Activated CD4-positive, alpha-beta memory T cell treated with anti-CD3 and anti-CD28 coated beads for 36 hours (primary cell): ENCODE measurements at regions of chr19 and their contacts with region 1.

Region 1: DNA sequence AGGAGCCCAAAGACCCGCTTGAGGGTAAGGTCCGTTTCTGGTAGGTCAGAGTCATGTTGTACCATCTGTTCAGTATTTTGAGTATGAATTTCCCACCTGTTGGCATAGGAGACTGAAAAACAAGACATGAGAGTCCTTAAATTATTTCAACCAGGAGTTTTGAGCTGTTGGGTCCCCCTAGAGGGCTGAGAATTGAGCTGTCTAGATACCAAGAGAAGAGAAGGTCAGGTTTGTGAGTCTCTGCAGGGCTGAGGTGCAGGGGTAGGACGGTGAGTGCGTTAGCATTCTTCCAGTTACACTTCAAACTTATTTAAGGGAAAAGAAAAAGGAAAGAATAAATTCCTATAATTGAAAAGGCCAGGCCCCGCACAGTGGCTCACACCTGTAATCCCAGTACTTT is 5.0 kb downstream of the CBLC start:
- DNase-seq: no peak
- H3K4me3 Mint-ChIP-seq: no peak overlapping the region
- H3K27ac Mint-ChIP-seq: no peak overlapping the region
- H3K4me1 Mint-ChIP-seq: peaks cover 4% of the 10 kb centered on the region
- H3K27me3 Mint-ChIP-seq: peaks cover 3% of the 10 kb centered on the region

Region 2: DNA sequence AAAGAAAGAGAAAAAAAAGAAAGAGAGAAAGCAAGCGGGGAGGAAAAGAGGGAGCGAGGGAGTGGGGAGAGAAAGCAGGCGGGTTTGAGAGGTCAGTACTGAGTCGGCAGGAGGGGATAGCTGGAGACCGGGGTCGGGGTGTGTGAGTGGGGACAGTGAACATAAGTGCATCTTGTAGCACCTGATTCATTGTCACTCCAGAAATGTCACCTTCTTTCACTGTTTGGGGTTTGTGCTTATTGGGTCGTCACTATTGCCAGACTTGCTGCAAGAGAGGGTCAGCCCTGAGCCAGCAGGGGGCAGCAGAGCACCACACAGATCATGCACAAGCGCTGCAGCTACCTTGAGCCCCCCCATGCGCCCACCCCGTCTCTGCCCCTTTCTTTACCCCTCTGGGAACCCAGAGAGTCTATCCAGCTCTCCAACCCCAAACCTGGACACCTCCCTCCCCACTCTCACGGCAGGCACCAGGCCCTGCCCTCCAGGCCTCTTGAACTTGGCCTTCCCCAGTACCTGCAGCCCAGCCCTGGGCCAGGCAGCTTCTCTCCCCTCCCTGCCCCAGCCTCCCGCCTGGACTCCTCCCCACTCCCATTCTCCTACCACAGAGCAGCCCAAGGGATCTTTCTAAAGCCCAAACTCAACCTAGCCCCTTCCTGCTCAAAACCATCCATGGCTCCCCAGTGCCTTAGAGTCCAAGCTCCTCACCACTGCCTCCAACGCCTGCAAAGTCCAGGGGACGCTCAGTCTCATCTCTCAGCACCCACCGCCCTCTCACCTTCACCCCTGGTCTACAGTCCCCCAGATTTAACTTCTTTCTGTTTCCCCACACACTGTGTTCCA is 93.5 kb before region 1 on chr19:
- CTCF ChIA-PET with region 1: interaction called, 16 read pairs
- POLR2A ChIA-PET with region 1: no interaction called
- intact Hi-C with region 1: no loop called
- DNase-seq: peak; percentile 81
- H3K4me3 Mint-ChIP-seq: no peak overlapping the region
- H3K27ac Mint-ChIP-seq: no peak overlapping the region
- H3K4me1 Mint-ChIP-seq: peaks cover 32% of the 10 kb centered on the region
- H3K27me3 Mint-ChIP-seq: peaks cover 10% of the 10 kb centered on the region

Region 3: GRCh38 chr19:44757735-44758505 is 24.8 kb before region 1 on chr19:
- CTCF ChIA-PET with region 1: no interaction called
- POLR2A ChIA-PET with region 1: no interaction called
- intact Hi-C with region 1: no loop called
- DNase-seq: no peak
- H3K4me3 Mint-ChIP-seq: no peak overlapping the region
- H3K27ac Mint-ChIP-seq: peak overlapping the region; percentile 56
- H3K4me1 Mint-ChIP-seq: peaks cover 41% of the 10 kb centered on the region
- H3K27me3 Mint-ChIP-seq: no peaks in the 10 kb centered on the region

Region 4: GRCh38 chr19:44800461-44800860 is 17.7 kb after region 1 on chr19:
- CTCF ChIA-PET with region 1: interaction called, 10 read pairs
- POLR2A ChIA-PET with region 1: no interaction called
- intact Hi-C with region 1: no loop called
- DNase-seq: peak; percentile 88
- H3K4me3 Mint-ChIP-seq: no peak overlapping the region
- H3K27ac Mint-ChIP-seq: no peak overlapping the region
- H3K4me1 Mint-ChIP-seq: peaks cover 14% of the 10 kb centered on the region
- H3K27me3 Mint-ChIP-seq: no peaks in the 10 kb centered on the region